ENCODE measurements at regions of chr2 and their contacts with region 1.

Region 1: GRCh38 chr2:30711646-30712085 is 95.6 kb downstream of the CAPN13 start:
- DNase-seq: peak; percentile 57
- ATAC-seq: peak; percentile 98
- H3K4me3 Mint-ChIP-seq: no peak overlapping the region
- H3K27ac Mint-ChIP-seq: no peak overlapping the region
- H3K4me1 Mint-ChIP-seq: peaks cover 11% of the 10 kb centered on the region
- H3K27me3 Mint-ChIP-seq: no peaks in the 10 kb centered on the region
- CTCF ChIP-seq: peak; percentile 79

Region 2: DNA sequence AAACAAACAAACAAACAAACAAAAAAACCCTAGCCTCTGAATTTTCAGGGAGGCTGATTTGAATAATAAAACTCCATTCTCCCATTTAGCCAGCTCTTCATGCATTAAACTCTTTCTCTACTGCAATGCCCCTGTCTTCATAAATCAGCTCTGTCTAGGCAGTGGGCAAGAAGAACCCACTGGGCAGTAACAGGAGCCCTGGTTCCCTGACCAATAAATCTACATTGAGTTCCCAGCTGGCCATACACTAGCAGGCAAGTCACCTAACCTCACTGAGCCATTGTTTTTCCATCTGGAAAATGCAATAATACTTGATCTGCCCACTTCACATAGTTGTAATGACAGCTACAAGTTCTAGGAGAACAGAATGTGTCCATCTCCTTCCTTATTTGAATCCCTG is 622.5 kb before region 1 on chr2:
- CTCF ChIA-PET with region 1: interaction called, 22 read pairs
- POLR2A ChIA-PET with region 1: no interaction called
- intact Hi-C with region 1: loop called (anchors 1 kb)
- DNase-seq: no peak
- ATAC-seq: no peak
- H3K4me3 Mint-ChIP-seq: no peak overlapping the region
- H3K27ac Mint-ChIP-seq: no peak overlapping the region
- H3K4me1 Mint-ChIP-seq: no peaks in the 10 kb centered on the region
- H3K27me3 Mint-ChIP-seq: peaks cover 34% of the 10 kb centered on the region
- CTCF ChIP-seq: no peak

Region 3: DNA sequence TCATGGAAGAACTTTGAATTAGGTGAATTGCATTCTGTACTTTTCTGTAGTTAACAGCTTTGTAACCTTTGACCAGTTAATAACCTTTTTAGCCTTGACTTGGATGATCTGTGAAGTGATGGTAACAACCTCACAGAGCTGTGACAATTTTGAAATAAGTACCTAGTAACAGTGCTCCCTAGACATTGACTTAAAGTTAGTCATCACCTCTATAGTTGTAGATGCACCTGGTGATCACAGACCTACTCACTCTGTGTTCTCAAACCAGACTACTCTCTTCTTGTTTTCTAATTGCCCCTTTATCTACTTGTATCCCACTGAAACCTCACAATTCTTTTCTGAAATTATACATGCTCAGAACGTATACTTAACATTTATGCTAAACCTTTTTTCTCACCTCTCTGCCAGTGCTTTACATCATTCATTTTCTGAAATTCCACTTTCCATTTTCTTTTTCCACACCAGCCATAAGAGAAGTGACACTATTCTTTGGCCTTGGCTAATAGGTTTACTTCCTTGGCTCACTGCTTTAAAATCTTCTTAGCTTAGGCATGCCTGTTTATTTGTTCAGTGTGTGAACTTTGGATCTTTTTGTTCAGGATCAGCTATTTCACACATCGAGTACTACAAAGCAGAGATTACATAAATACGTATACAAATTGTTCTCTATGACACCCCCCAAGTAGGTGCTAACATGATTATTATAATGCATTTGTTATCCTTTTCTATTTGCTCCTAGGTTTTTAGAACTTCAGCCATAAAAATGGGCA is 555.6 kb before region 1 on chr2:
- CTCF ChIA-PET with region 1: interaction called, 32 read pairs
- POLR2A ChIA-PET with region 1: no interaction called
- intact Hi-C with region 1: no loop called
- DNase-seq: no peak
- ATAC-seq: no peak
- H3K4me3 Mint-ChIP-seq: no peak overlapping the region
- H3K27ac Mint-ChIP-seq: no peak overlapping the region
- H3K4me1 Mint-ChIP-seq: peaks cover 57% of the 10 kb centered on the region
- H3K27me3 Mint-ChIP-seq: no peaks in the 10 kb centered on the region
- CTCF ChIP-seq: no peak

Region 4: GRCh38 chr2:30225131-30225762 is 486.4 kb before region 1 on chr2:
- CTCF ChIA-PET with region 1: interaction called, 14 read pairs
- POLR2A ChIA-PET with region 1: no interaction called
- intact Hi-C with region 1: loop called (anchors 1 kb)
- DNase-seq: no peak
- ATAC-seq: peak; percentile 64
- H3K4me3 Mint-ChIP-seq: peak overlapping the region; percentile 90
- H3K27ac Mint-ChIP-seq: peak overlapping the region; percentile 99
- H3K4me1 Mint-ChIP-seq: peaks cover 63% of the 10 kb centered on the region
- H3K27me3 Mint-ChIP-seq: no peaks in the 10 kb centered on the region
- CTCF ChIP-seq: no peak

Region 5: GRCh38 chr2:30503007-30503694 is 208.5 kb before region 1 on chr2:
- CTCF ChIA-PET with region 1: interaction called, 3 read pairs
- POLR2A ChIA-PET with region 1: no interaction called
- intact Hi-C with region 1: loop called (anchors 1 kb)
- DNase-seq: no peak
- ATAC-seq: peak; percentile 65
- H3K4me3 Mint-ChIP-seq: peak overlapping the region; percentile 36
- H3K27ac Mint-ChIP-seq: peak overlapping the region; percentile 91
- H3K4me1 Mint-ChIP-seq: peaks cover 48% of the 10 kb centered on the region
- H3K27me3 Mint-ChIP-seq: no peaks in the 10 kb centered on the region
- CTCF ChIP-seq: no peak

Region 6: DNA sequence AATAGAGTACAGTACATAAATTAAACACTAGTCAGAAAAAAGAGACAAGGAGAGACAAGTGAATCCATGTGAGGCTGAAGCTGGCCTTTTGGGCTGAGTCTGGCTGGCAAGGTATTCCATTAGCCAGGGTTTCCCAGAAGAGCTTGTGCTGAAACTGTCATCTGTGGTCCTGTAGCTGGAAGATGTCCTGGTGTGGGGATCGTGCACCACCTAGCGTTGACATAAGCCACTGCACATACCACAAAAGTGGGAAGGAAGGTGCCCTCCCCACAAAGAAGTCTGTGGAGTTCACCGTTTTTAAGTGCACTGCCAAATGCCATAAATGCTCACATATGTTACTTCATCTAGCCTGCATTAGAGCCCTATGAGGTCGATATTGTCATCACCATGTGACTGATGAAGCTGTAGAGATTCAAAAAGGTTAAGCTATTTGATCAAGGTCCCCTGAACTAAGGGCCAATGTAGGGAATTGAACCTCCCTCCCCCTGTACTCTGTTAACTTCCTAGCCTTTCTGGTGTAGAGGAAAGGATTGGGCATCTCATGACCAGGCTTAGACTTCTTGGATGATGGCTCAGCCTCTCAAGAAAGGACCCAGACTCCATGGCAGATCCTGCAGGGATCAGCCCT is 458.5 kb after region 1 on chr2:
- CTCF ChIA-PET with region 1: interaction called, 26 read pairs
- POLR2A ChIA-PET with region 1: interaction called, 4 read pairs
- intact Hi-C with region 1: loop called (anchors 1 kb)
- DNase-seq: peak; percentile 42
- ATAC-seq: peak; percentile 97
- H3K4me3 Mint-ChIP-seq: no peak overlapping the region
- H3K27ac Mint-ChIP-seq: no peak overlapping the region
- H3K4me1 Mint-ChIP-seq: peaks cover 25% of the 10 kb centered on the region
- H3K27me3 Mint-ChIP-seq: no peaks in the 10 kb centered on the region
- CTCF ChIP-seq: peak; percentile 30

Region 7: GRCh38 chr2:31333527-31334183 is 622.0 kb after region 1 on chr2:
- CTCF ChIA-PET with region 1: interaction called, 173 read pairs
- POLR2A ChIA-PET with region 1: no interaction called
- intact Hi-C with region 1: loop called (anchors 1 kb)
- DNase-seq: peak; percentile 70
- ATAC-seq: peak; percentile 94
- H3K4me3 Mint-ChIP-seq: no peak overlapping the region
- H3K27ac Mint-ChIP-seq: peak overlapping the region; percentile 50
- H3K4me1 Mint-ChIP-seq: peaks cover 10% of the 10 kb centered on the region
- H3K27me3 Mint-ChIP-seq: peaks cover 3% of the 10 kb centered on the region
- CTCF ChIP-seq: peak; percentile 87